ENCODE measurements at regions of chrX and their contacts with region 1.

Region 1: DNA sequence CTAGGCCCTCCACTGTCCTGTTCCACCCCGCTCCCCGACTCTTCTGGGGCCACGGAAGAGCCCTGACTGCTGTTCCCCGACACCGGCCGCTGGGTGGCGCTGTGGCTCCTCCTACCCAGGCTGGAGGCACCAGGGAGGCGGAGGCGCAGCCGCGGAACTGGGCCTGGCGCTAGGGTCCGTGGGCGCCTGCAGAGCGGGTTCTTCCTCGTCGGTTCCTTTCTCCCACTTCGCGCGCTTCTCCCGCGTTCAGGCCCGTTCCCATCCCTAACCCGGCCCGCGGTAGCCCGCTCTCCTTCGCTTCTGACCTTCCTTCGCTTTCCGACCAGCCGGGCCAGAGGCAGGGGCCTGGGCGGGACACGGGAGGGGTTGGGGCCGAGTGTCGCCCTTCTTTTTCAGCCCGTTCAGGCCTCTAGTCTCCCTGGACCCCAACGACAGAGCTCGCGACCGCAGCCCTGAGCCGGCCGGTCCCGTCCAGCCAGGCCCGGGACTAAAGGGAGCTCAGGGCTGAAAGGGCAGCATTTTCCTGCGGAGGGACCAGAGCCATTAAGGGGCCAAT is 34.3 kb downstream of the NALF2 start:
- DNase-seq: peak; percentile 48
- H3K4me3 ChIP-seq: peak overlapping the region; percentile 20 to 24
- H3K27ac ChIP-seq: no peak overlapping the region
- H3K4me1 ChIP-seq: no peaks in the 10 kb centered on the region
- H3K27me3 ChIP-seq: no peaks in the 10 kb centered on the region
- CTCF ChIP-seq: peak; percentile 47 to 77 (median 71)
- POLR2A ChIP-seq: no peak

Region 2: GRCh38 chrX:69615779-69616456 is 77.5 kb after region 1 on chrX and contains the start of gene EDA:
- intact Hi-C with region 1: loop called (anchors 5 kb)
- DNase-seq: peak; percentile 78
- H3K4me3 ChIP-seq: peak within 1 kb of the TSS; percentile 43 to 46
- H3K27ac ChIP-seq: peak within 1 kb of the TSS in 1 of 2 donors; percentile 39
- H3K4me1 ChIP-seq: no peaks in the 10 kb centered on the region
- H3K27me3 ChIP-seq: no peaks in the 10 kb centered on the region
- CTCF ChIP-seq: no peak
- POLR2A ChIP-seq: no peak
- total RNA-seq, gene EDA: 8.1 to 10.1 TPM

Region 3: GRCh38 chrX:70030301-70030767 is 491.9 kb after region 1 on chrX:
- intact Hi-C with region 1: loop called (anchors 5 kb)
- DNase-seq: peak; percentile 8
- H3K4me3 ChIP-seq: no peak overlapping the region
- H3K27ac ChIP-seq: no peak overlapping the region
- H3K4me1 ChIP-seq: no peaks in the 10 kb centered on the region
- H3K27me3 ChIP-seq: no peaks in the 10 kb centered on the region
- CTCF ChIP-seq: peak in 3 of 4 experiments; percentile 32 to 57 (median 49)
- POLR2A ChIP-seq: no peak